IMR-90 (cell line): ENCODE measurements at regions of chr1 and their contacts with region 1.

Region 1: DNA sequence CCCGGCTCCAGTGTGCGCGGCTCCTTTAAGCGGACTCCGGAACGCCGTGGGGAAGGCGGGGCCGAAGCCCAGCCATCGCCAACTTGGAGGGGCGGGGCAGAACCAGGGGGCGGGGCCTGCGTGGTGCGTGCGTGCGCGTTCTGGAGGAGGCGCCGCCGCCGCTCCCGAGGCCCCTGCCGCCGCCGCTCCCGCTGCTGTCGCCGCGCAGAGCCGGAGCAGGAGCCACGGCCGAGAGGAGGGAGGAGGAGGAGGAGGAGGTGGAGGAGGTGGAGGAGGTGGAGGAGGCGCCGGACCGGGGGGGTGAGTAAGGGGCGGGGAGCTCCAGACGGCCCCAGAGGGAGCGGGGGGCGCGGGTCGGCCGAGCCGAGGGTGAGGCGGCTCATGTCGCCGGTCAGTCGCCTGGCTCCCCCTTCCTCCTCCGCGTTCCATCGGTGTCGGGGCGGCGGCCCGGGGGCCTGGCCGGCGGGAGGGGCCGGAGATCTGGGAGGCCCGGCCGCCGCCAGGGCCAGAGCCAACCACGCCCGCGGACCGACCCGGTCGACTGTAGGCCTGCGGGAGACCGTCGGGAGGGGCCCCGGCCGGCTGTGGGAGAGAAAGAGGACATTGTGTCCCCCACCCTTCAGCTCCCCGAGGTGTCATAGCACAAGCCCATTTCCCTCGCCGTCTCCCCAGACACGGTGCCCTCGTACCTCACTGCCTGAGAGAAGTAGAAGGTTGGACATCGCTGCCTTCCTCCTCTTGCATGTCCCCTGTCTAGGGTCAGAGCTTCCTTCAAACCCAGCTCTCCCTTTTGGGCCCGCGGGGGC is at the start of gene RAP1A:
- DNase-seq: peak; percentile 88
- ATAC-seq: peak; percentile 96
- H3K4me3 ChIP-seq: peak within 1 kb of the TSS; percentile 99
- H3K27ac ChIP-seq: peak within 1 kb of the TSS; percentile 90
- H3K4me1 ChIP-seq: peaks cover 7% of the 10 kb centered on the region; the same call in 1 of the 2 replicates
- H3K27me3 ChIP-seq: no peaks in the 10 kb centered on the region
- CTCF ChIP-seq: no peak
- POLR2A ChIP-seq: peak; percentile 56; the same call in 1 of the 2 replicates
- RAD21 ChIP-seq: no peak
- total RNA-seq, gene RAP1A: 18.1 and 35.3 TPM in 2 replicates

Region 2: DNA sequence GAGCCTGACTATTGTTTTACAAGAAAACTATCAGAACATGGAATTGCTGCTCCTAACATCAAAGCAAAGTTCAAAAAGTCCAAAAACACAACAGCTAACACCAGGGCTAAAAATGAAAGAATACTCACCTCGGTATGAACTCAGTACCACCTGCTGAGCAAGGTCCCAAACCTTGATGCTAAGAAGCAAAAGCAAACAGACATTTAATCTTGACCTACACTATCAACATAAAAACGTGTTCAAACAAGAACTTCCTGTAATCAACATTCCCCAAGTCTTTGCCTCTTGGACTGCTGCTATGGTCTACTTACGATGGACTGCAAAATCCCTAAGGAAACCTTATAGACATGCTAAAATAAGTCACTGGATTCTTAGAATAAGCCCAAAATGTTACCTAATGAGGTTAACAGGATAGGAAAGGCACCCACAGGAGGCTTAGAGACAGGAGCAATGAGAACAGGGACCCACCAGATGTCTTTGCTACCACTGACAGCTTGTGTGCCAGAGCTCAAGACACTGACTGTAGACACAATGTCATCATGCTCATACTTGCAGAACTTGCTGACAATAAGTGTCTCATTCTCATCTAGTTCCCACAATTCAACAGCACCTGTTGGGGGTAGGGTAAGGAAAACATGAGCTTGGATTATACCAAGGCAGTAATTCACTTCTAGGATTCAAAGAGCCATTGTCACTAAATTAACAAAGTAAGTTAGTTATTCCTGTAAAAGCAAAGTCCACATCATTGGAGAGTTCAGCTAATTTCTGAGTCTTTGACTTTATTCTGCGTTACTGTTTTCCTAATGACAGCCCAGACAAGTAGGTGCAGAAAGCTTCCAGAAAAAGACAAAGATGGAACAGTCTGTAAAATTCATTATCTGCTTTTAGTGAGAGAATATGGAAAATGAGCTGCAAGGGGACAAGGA is 172.6 kb before region 1 on chr1:
- CTCF ChIA-PET with region 1: no interaction called
- POLR2A ChIA-PET with region 1: interaction called, 12 read pairs
- dilution Hi-C with region 1: no loop called
- in situ Hi-C with region 1: no loop called
- intact Hi-C with region 1: no loop called
- DNase-seq: no peak
- ATAC-seq: no peak
- H3K4me3 ChIP-seq: no peak overlapping the region
- H3K27ac ChIP-seq: no peak overlapping the region
- H3K4me1 ChIP-seq: peaks cover 2% of the 10 kb centered on the region
- H3K27me3 ChIP-seq: no peaks in the 10 kb centered on the region
- CTCF ChIP-seq: no peak
- POLR2A ChIP-seq: no peak
- RAD21 ChIP-seq: no peak

Region 3: GRCh38 chr1:111592389-111593361 is 27.2 kb before region 1 on chr1:
- CTCF ChIA-PET with region 1: no interaction called
- POLR2A ChIA-PET with region 1: interaction called, 16 read pairs
- dilution Hi-C with region 1: no loop called
- in situ Hi-C with region 1: no loop called
- intact Hi-C with region 1: no loop called
- DNase-seq: peak; percentile 87
- ATAC-seq: peak; percentile 88
- H3K4me3 ChIP-seq: no peak overlapping the region
- H3K27ac ChIP-seq: 0 out of 2 replicates have a peak overlapping the region, but pooled peaks have one; percentile 15
- H3K4me1 ChIP-seq: peaks cover 10% of the 10 kb centered on the region
- H3K27me3 ChIP-seq: no peaks in the 10 kb centered on the region
- CTCF ChIP-seq: no peak
- POLR2A ChIP-seq: no peak
- RAD21 ChIP-seq: 0 out of 2 replicates have a peak, but pooled peaks have one; percentile 2

Region 4: DNA sequence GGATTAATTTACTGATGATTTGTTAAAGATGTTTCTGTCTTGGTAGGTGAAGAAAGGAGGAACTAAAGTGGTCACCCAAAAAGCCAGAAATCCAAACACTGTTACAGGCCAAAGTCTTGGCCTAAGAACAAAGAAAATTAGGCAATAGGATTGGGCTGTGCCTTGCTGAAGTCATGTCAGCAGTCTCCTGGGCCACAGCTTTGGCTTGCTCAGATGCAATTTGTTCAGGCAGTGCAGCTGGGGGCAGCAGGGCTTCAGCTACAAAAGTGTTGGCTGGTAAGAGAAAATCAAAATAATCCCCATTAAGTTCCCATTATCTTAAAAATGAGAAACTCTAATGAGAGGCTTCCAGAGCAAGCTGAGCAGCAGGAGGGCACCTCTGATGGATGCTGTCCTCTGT is 14.3 kb before region 1 on chr1:
- CTCF ChIA-PET with region 1: no interaction called
- POLR2A ChIA-PET with region 1: no interaction called
- dilution Hi-C with region 1: no loop called
- in situ Hi-C with region 1: no loop called
- intact Hi-C with region 1: no loop called
- DNase-seq: peak; percentile 36
- ATAC-seq: peak; percentile 45
- H3K4me3 ChIP-seq: no peak overlapping the region
- H3K27ac ChIP-seq: no peak overlapping the region
- H3K4me1 ChIP-seq: peaks cover 11% of the 10 kb centered on the region
- H3K27me3 ChIP-seq: no peaks in the 10 kb centered on the region
- CTCF ChIP-seq: no peak
- POLR2A ChIP-seq: no peak
- RAD21 ChIP-seq: no peak

Region 5: GRCh38 chr1:111690306-111690617 is 70.4 kb after region 1 on chr1:
- CTCF ChIA-PET with region 1: no interaction called
- POLR2A ChIA-PET with region 1: no interaction called
- dilution Hi-C with region 1: no loop called
- in situ Hi-C with region 1: no loop called
- intact Hi-C with region 1: loop called (anchors 5 kb)
- DNase-seq: peak; percentile 91
- ATAC-seq: peak; percentile 87
- H3K4me3 ChIP-seq: no peak overlapping the region
- H3K27ac ChIP-seq: no peak overlapping the region
- H3K4me1 ChIP-seq: no peaks in the 10 kb centered on the region
- H3K27me3 ChIP-seq: no peaks in the 10 kb centered on the region
- CTCF ChIP-seq: no peak
- POLR2A ChIP-seq: no peak
- RAD21 ChIP-seq: no peak